Activated CD8-positive, alpha-beta memory T cell treated with anti-CD3 and anti-CD28 coated beads, Interleukin-2, amount 10 ng/mL, durations not matched to agents 7 days and 5 days (primary cell): ENCODE measurements at regions of chr5 and their contacts with region 1.

Region 1: GRCh38 chr5:172006321-172007174 is at the start of gene FBXW11:
- DNase-seq: peak; percentile 98
- ATAC-seq: peak; percentile 89
- H3K4me3 Mint-ChIP-seq: peak within 1 kb of the TSS; percentile 95
- H3K27ac Mint-ChIP-seq: peak within 1 kb of the TSS; percentile 98
- H3K4me1 Mint-ChIP-seq: peaks cover 47% of the 10 kb centered on the region
- H3K27me3 Mint-ChIP-seq: no peaks in the 10 kb centered on the region
- total RNA-seq, gene FBXW11: 31.2 to 50.4 TPM

Region 2: GRCh38 chr5:171913987-171914273 is 92.6 kb before region 1 on chr5:
- CTCF ChIA-PET with region 1: interaction called, 25 read pairs
- DNase-seq: no peak
- ATAC-seq: no peak
- H3K4me3 Mint-ChIP-seq: no peak overlapping the region
- H3K27ac Mint-ChIP-seq: no peak overlapping the region
- H3K4me1 Mint-ChIP-seq: peaks cover 35% of the 10 kb centered on the region
- H3K27me3 Mint-ChIP-seq: no peaks in the 10 kb centered on the region

Region 3: DNA sequence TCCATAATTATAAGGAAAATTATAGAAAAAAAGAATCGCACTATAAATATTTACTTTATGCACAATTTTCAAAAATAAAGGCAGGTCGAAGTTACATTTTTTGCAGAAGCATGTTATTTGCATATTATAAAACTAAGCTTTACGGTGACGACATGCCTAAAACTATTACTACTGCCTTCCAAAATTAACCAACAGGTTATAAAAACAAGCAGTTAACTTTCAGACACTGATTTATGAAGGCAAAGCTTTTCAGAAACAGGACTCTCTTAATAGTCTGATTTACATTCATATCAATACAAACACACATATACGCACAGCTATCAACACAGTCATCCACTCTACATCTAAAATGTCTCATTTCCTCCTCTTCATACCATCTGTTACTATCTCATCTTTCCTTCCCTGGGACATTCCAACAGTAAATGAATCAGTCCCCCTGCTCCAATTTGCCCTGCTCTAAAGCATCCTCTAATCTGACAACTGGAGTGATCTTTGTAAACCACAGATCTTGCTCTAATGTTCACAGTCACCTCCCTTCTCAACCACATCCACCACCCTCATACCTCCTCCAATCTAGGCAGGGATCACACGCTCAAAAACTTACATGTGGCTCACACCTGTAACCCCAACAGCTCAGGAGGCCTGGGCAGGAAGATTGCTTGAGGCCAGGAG is 21.7 kb before region 1 on chr5:
- CTCF ChIA-PET with region 1: interaction called, 22 read pairs
- DNase-seq: peak; percentile 73
- ATAC-seq: peak; percentile 77
- H3K4me3 Mint-ChIP-seq: no peak overlapping the region
- H3K27ac Mint-ChIP-seq: peak overlapping the region; percentile 38
- H3K4me1 Mint-ChIP-seq: peaks cover 29% of the 10 kb centered on the region
- H3K27me3 Mint-ChIP-seq: no peaks in the 10 kb centered on the region

Region 4: DNA sequence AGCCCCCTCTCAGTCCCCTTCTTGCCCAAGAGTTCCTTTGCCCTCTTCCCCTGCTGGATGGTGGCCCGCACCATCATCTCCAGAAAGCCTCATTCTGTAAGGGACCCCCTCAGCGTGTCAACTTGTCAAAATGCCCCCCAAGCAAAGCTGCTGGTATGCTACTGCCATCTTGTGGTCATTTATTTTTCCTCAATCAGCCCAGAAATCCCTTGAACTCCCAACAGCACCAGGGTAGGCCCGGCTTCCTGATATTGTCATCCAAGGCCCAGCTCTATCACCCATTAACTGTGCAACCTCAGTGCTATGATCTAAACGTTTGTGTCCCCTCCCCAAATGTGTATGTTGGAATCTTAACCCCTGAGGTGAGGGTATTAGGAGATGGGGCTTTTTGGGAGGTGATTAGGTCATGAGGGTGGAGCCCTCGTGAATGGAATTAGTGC is 53.1 kb after region 1 on chr5:
- CTCF ChIA-PET with region 1: interaction called, 18 read pairs
- DNase-seq: no peak
- ATAC-seq: no peak
- H3K4me3 Mint-ChIP-seq: no peak overlapping the region
- H3K27ac Mint-ChIP-seq: no peak overlapping the region
- H3K4me1 Mint-ChIP-seq: peaks cover 4% of the 10 kb centered on the region
- H3K27me3 Mint-ChIP-seq: no peaks in the 10 kb centered on the region

Region 5: DNA sequence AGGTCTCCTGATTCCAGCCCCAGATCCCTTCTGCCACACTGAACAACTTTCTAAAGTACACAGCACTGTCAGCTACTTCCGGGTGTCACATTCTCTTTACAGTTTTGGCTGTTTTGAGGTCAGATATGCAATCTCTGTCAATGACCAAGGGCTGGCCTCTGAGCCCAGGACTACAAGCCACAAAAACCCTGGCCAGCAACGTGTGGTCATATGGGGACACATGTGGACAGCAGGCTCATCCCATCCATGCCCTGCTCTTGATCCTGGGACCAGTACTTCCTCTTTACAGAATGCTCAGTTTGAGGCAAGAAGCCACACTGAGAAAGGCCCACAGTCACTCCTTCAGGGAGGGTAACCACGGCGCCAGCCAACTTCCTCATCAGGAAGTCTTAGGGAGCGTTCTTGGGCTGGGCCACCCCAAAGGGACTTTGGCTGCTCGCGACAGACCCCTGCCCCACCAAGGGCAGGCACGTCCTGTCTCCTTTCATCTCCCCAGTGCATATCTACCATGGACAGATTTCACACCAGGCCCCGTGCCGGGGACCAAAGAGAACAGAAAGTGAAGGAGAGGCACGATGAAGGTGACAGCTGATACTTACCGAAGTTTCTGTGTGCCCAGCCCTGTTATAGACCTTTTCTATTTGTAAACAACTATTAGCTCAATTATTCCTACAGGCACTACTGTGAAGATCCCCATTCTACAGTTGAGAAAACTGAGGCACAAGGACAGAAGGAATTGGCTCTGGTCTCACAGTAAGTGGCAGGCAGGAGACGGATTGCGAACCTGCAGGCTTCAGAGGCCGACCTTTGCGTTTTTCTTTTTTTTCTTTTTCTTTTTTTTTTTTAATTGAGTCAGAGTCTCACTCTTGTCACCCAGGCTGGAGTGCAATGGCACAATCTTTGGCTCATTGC is 144.2 kb after region 1 on chr5:
- CTCF ChIA-PET with region 1: no interaction called
- DNase-seq: peak; percentile 64
- ATAC-seq: peak; percentile 83
- H3K4me3 Mint-ChIP-seq: peak overlapping the region; percentile 56
- H3K27ac Mint-ChIP-seq: peak overlapping the region; percentile 85
- H3K4me1 Mint-ChIP-seq: peaks cover 69% of the 10 kb centered on the region
- H3K27me3 Mint-ChIP-seq: no peaks in the 10 kb centered on the region

Region 6: DNA sequence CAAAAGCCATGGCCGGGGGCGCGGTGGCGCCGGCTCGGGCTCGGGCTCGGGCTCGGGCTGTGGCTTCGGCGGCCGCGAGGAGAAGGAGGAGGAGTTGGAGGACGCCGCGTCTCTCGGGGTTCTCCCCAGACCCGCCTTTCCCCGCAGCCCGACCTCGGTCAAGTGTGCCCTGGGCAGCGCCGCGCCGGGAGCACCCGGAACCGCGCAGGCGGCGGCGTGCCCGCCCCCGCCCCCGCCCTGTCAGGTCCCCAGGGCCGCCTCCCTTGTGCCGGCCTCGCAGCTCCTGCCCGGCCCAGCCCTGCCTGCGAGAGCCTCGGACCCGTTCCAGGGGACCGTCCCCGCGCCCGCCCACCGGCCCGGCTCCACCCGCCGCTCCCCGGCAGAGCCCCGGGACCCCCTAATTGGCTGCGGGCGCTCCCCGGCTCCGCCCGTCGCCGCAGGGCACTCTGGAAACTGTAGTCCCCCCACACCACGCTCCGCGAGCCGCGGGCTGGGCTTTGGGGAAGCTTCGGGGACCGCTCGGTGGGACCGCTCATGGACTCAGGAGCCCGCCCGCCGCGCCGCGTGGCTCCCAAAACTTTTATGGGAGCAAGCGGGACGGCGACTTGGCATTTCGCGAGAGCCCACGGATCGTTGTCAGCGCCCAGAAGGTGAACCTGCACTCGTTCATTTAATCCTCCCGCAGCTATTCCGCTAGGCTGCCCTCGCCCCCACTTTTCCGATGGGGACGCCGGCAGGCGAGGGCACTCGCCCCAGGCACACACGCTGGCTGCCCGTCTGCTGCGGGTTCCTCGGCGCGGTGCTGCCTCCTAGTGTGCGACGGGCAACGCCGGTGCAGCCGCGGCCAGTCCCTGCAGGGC is 181.7 kb after region 1 on chr5 and contains the start of gene STK10:
- CTCF ChIA-PET with region 1: interaction called, 34 read pairs
- DNase-seq: peak; percentile 94
- ATAC-seq: peak; percentile 80
- H3K4me3 Mint-ChIP-seq: peak within 1 kb of the TSS; percentile 94
- H3K27ac Mint-ChIP-seq: peak within 1 kb of the TSS; percentile 90
- H3K4me1 Mint-ChIP-seq: peaks cover 27% of the 10 kb centered on the region
- H3K27me3 Mint-ChIP-seq: no peaks in the 10 kb centered on the region
- total RNA-seq, gene STK10: 223 to 327 TPM

Region 7: GRCh38 chr5:172293054-172293744 is 286.7 kb after region 1 on chr5:
- CTCF ChIA-PET with region 1: interaction called, 10 read pairs
- DNase-seq: peak; percentile 76
- ATAC-seq: peak; percentile 99
- H3K4me3 Mint-ChIP-seq: no peak overlapping the region
- H3K27ac Mint-ChIP-seq: no peak overlapping the region
- H3K4me1 Mint-ChIP-seq: peaks cover 2% of the 10 kb centered on the region
- H3K27me3 Mint-ChIP-seq: peaks cover 9% of the 10 kb centered on the region